Activated CD4-positive, alpha-beta T cell treated with anti-CD3 and anti-CD28 coated beads for 36 hours (primary cell): ENCODE measurements at regions of chr3 and their contacts with region 1.

Region 1: GRCh38 chr3:44805960-44806359 is 44.4 kb downstream of the KIF15 start:
- DNase-seq: no peak
- ATAC-seq: no peak
- H3K4me3 Mint-ChIP-seq: no peak overlapping the region
- H3K27ac Mint-ChIP-seq: no peak overlapping the region
- H3K4me1 Mint-ChIP-seq: no peaks in the 10 kb centered on the region
- H3K27me3 Mint-ChIP-seq: no peaks in the 10 kb centered on the region

Region 2: DNA sequence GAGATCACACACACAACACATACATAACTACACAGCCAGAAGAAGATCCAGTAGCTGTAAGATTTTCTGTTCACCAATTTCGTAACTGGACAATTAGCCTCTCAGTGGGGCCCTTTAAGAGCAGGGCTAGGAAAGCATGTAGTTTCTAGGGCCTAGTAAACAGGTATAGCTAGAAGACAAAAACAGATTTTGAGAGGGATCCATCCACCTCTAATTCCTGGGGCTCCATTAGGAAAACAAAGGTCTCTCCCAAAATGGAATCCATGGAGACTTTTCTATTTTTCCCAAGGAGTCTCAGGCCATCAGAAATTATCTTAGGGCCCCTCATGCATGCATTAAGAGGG is 33.9 kb before region 1 on chr3:
- CTCF ChIA-PET with region 1: no interaction called
- POLR2A ChIA-PET with region 1: no interaction called
- intact Hi-C with region 1: no loop called
- DNase-seq: no peak
- ATAC-seq: no peak
- H3K4me3 Mint-ChIP-seq: no peak overlapping the region
- H3K27ac Mint-ChIP-seq: no peak overlapping the region
- H3K4me1 Mint-ChIP-seq: no peaks in the 10 kb centered on the region
- H3K27me3 Mint-ChIP-seq: no peaks in the 10 kb centered on the region

Region 3: GRCh38 chr3:44848634-44849033 is 42.7 kb after region 1 on chr3:
- CTCF ChIA-PET with region 1: no interaction called
- POLR2A ChIA-PET with region 1: no interaction called
- intact Hi-C with region 1: loop called in 1 of 2 experiments (anchors 2 kb)
- DNase-seq: no peak
- ATAC-seq: no peak
- H3K4me3 Mint-ChIP-seq: no peak overlapping the region
- H3K27ac Mint-ChIP-seq: no peak overlapping the region
- H3K4me1 Mint-ChIP-seq: no peaks in the 10 kb centered on the region
- H3K27me3 Mint-ChIP-seq: no peaks in the 10 kb centered on the region

Region 4: DNA sequence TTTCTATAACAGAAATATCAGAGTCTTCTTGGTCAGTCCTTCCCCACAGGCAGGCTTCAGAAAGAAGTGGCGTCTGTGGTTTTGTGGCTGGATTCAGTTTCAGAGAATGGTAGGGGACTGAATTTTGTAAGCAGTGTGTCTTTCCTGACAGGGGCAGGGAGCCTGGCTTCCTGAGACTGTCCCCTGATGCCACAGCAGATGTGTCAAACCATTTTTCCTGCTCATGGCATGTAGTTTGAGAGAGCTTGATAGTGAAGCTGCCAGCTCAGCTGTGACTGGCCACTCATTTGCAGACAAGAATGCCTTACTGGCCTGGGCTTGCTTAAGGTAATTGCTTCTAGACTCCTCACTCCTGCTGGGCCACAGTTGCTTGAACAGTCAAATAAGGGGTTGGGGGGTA is 608.9 kb after region 1 on chr3:
- CTCF ChIA-PET with region 1: no interaction called
- POLR2A ChIA-PET with region 1: no interaction called
- intact Hi-C with region 1: no loop called
- DNase-seq: peak; percentile 7
- ATAC-seq: peak; percentile 36
- H3K4me3 Mint-ChIP-seq: no peak overlapping the region
- H3K27ac Mint-ChIP-seq: no peak overlapping the region
- H3K4me1 Mint-ChIP-seq: peaks cover 4% of the 10 kb centered on the region
- H3K27me3 Mint-ChIP-seq: no peaks in the 10 kb centered on the region